T-cell (primary cell): ENCODE measurements at regions of chr5 and their contacts with region 1.

Region 1: DNA sequence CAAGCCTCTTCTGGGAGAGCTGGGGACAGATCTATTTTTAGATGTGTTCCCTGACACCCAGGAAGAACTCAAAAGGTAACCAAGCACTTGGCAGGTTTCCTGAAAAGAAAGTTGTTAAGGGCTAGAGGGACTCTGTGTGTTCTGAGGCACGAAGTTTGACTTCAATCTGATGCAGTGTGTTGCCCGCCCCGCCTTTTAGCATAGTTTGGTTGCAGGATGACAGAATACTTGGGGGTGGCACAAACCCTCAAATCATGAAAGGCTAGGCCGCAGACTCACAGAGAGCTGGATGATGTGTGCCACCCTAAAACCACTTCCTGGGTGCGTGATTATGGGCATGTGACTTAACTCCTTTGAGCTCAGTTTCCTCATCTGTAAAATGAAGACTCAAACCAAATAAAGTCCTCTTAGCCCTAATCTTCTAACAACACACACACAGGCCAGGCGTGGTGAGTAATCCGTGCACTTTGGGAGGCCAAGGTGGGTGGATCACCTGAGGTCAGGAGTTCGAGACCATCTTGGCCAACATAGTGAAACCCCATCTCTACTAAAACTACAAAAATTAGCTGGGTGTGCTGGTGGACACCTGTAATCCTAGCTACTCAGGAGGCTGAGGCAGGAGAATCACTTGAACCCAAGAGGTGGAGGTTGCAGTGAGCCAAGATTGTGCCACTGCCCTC is 12.8 kb upstream of the NDFIP1 start:
- DNase-seq: peak; percentile 54 to 94 (median 85)
- ATAC-seq: peak; percentile 92 to 98 (median 97)
- H3K4me3 ChIP-seq: peak overlapping the region in 1 of 2 donors; percentile 4
- H3K4me3 Mint-ChIP-seq: peak overlapping the region; percentile 10 to 70 (median 43)
- H3K27ac ChIP-seq: peak overlapping the region; percentile 89
- H3K27ac Mint-ChIP-seq: peak overlapping the region; percentile 90 to 94
- H3K4me1 ChIP-seq: peaks cover 38 to 47% of the 10 kb centered on the region in 2 experiments
- H3K4me1 Mint-ChIP-seq: peaks cover 49 to 59% (median 56%) of the 10 kb centered on the region in 3 donors
- H3K27me3 ChIP-seq: no peaks in the 10 kb centered on the region
- H3K27me3 Mint-ChIP-seq: no peaks in the 10 kb centered on the region

Region 2: DNA sequence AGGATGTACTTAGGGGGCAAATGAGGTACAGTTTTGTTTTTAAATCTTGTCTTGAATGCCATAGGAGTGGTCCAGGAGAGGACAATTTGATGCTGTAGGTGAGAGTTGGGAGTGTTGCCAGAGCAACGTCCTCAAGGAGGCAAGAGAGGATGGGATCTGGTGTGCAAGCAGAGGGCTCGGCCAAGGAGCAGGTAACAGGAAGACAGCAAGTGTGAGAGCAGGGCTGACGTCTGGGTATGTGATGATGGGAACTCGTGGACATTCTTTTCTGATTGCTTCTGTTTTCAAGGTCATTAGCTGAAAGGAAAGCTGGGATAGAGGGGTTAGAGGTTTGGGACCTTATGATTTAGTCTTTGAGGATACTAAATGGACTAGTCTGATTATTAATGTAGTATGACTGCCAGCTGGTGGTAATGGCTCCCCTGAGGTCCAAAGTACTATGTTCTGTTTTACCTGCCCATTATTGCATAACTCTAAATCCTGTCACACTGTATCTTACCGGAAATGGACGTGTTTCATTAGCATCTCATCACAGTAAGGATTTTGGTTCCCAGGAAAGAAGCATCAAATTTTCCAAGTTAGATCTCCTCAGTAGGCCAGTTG is 98.3 kb before region 1 on chr5:
- CTCF ChIA-PET with region 1: no interaction called
- POLR2A ChIA-PET with region 1: interaction called in 1 of 2 experiments, 12 read pairs
- DNase-seq: no peak
- ATAC-seq: no peak
- H3K4me3 ChIP-seq: no peak overlapping the region
- H3K4me3 Mint-ChIP-seq: no peak overlapping the region
- H3K27ac ChIP-seq: no peak overlapping the region
- H3K27ac Mint-ChIP-seq: no peak overlapping the region
- H3K4me1 ChIP-seq: no peaks in the 10 kb centered on the region
- H3K4me1 Mint-ChIP-seq: peaks cover 4 to 9% (median 5%) of the 10 kb centered on the region in 3 donors
- H3K27me3 ChIP-seq: no peaks in the 10 kb centered on the region
- H3K27me3 Mint-ChIP-seq: no peaks in the 10 kb centered on the region

Region 3: GRCh38 chr5:142003011-142003725 is 92.6 kb before region 1 on chr5:
- CTCF ChIA-PET with region 1: no interaction called
- POLR2A ChIA-PET with region 1: interaction called, 4 to 10 read pairs
- DNase-seq: no peak
- ATAC-seq: no peak
- H3K4me3 ChIP-seq: no peak overlapping the region
- H3K4me3 Mint-ChIP-seq: peak overlapping the region in 1 of 3 donors; percentile 61
- H3K27ac ChIP-seq: no peak overlapping the region
- H3K27ac Mint-ChIP-seq: peak overlapping the region in 1 of 2 donors; percentile 75
- H3K4me1 ChIP-seq: peaks cover 30 to 37% of the 10 kb centered on the region in 2 experiments
- H3K4me1 Mint-ChIP-seq: peaks cover 45 to 51% (median 45%) of the 10 kb centered on the region in 3 donors
- H3K27me3 ChIP-seq: no peaks in the 10 kb centered on the region
- H3K27me3 Mint-ChIP-seq: no peaks in the 10 kb centered on the region

Region 4: DNA sequence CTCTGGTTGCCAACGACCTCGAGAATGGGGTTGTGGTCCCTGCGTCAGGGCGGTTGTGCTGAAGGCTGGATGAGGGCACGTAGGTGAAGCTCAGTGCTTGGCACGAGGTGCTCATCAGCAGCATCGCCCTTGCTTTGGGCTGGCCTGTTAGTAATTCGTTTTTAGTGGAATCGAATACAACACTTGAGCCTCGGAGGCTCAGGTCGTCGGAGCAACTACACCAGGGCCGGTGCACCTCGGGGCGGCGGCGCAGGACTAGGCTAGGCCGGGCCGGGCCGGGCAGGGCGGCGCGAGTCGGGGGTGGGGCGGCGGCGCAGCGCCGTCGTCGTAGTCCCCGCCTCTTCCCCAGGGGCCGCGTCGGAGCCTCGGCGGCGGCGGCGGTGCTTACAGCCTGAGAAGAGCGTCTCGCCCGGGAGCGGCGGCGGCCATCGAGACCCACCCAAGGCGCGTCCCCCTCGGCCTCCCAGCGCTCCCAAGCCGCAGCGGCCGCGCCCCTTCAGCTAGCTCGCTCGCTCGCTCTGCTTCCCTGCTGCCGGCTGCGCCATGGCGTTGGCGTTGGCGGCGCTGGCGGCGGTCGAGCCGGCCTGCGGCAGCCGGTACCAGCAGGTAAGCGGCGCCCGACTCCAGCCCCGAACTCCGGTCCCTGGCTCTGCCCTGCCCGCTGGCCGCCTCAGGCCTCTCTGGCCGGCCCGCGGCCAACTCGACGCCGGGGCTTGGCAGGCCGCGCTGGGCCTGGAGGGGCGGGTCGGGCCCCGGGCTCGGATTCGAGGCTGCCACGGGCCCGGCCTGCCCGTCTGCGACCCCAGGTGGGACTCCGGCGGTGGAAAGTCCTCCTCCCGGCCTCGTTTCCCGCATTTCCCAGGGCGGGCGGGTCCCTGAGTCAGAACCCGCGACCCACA is 12.9 kb after region 1 on chr5 and contains the start of gene NDFIP1:
- CTCF ChIA-PET with region 1: interaction called, 8 to 29 read pairs
- POLR2A ChIA-PET with region 1: interaction called, 5 to 49 read pairs
- DNase-seq: peak; percentile 68 to 91 (median 80)
- ATAC-seq: peak; percentile 80 to 94 (median 93)
- H3K4me3 ChIP-seq: peak within 1 kb of the TSS; percentile 88 to 89
- H3K4me3 Mint-ChIP-seq: peak within 1 kb of the TSS; percentile 92 to 99 (median 94)
- H3K27ac ChIP-seq: peak within 1 kb of the TSS; percentile 92
- H3K27ac Mint-ChIP-seq: peak within 1 kb of the TSS; percentile 95 to 98
- H3K4me1 ChIP-seq: peaks cover 45 to 52% of the 10 kb centered on the region in 2 experiments
- H3K4me1 Mint-ChIP-seq: peaks cover 70 to 86% (median 80%) of the 10 kb centered on the region in 3 donors
- H3K27me3 ChIP-seq: no peaks in the 10 kb centered on the region
- H3K27me3 Mint-ChIP-seq: no peaks in the 10 kb centered on the region
- total RNA-seq, gene NDFIP1: 76.3 to 194 (median 90.8) TPM